CD4-positive, alpha-beta memory T cell (primary cell): ENCODE measurements at regions of chr22 and their contacts with region 1.

Region 1: DNA sequence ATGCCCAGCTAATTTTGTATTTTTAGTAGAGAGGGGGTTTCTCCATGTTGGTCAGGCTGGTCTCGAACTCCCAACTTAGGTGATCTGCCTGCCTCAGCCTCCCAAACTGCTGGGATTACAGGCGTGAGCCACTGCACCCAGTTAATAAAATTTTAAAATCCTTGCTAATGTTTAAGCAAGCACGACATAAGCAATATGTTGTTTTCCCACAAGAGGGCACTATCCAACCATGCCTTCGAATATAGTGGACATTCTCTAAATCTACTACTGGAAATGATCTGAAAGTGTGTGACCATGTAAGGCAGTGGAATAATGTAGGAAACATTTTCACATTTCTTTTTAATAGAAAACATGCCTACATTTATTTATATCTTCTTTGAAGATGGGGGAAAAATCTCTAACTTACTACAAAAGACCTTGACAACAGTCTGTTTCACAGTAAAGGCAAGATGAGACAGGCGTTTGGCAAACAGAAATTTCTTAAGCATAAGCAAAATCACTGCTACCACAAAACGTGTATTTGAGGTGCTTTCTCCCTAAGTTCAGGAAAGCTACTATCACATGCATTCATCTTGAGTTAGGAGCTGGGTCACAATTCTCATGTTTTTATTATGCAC is 38.2 kb downstream of the PITPNB start:
- DNase-seq: peak in 4 of 5 donors; percentile 24 to 36 (median 28)
- H3K4me3 ChIP-seq: no peak overlapping the region
- H3K4me3 Mint-ChIP-seq: no peak overlapping the region
- H3K27ac ChIP-seq: no peak overlapping the region
- H3K27ac Mint-ChIP-seq: peak overlapping the region in 1 of 7 donors; percentile 72
- H3K4me1 ChIP-seq: peaks cover 18% of the 10 kb centered on the region
- H3K4me1 Mint-ChIP-seq: peaks cover 11 to 27% (median 20%) of the 10 kb centered on the region in 4 donors
- H3K27me3 ChIP-seq: no peaks in the 10 kb centered on the region
- H3K27me3 Mint-ChIP-seq: no peaks in the 10 kb centered on the region

Region 2: DNA sequence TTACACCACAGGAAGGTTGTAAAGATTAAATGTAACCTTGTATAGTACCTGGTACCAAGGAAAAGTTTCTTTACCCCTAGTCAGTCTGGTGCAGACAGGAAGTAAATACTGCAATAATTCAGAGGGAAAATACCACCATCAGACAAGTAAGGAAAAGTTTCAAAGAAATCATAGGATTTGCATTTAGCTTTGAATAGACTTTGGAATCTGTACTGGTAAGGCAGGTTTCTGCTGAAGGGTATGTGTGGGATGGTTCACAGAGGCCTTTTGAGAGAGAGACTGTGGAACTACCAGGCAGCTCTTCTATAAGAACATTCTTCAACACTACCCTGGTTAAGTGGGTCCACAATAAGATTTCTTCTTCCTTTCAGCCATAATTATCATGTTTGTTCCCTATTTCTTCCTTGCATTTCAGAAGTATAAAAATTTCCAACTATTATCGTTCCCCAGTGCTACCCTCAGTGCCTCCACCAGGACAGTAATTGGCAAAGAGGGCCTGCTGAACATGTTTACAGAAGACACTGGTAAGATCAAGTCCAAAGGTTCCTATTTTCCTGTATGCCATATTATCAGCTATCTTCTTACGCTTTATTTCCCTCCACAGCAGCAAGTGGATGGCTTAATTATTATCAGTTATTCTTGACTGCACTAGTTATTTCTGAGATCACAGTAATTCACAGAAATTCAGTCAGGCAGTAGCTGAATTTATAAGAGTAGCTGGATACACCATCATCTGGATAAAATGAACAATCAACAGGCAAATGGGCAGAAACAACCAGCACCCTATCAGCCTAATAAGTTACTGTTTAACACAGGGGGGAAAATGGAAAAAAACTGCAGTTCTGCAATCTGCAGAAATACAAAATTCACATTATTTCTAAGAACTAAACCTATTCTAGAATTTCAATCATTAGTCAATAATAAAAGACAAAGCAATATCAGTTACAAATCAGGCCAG is 10.4 kb before region 1 on chr22:
- CTCF ChIA-PET with region 1: interaction called, 32 read pairs
- POLR2A ChIA-PET with region 1: no interaction called
- intact Hi-C with region 1: no loop called
- DNase-seq: no peak
- H3K4me3 ChIP-seq: no peak overlapping the region
- H3K4me3 Mint-ChIP-seq: no peak overlapping the region
- H3K27ac ChIP-seq: no peak overlapping the region
- H3K27ac Mint-ChIP-seq: peak overlapping the region in 6 of 7 donors; percentile 6 to 76 (median 61)
- H3K4me1 ChIP-seq: peaks cover under 1% of the 10 kb centered on the region
- H3K4me1 Mint-ChIP-seq: peaks cover 28 to 59% (median 42%) of the 10 kb centered on the region in 4 donors
- H3K27me3 ChIP-seq: no peaks in the 10 kb centered on the region
- H3K27me3 Mint-ChIP-seq: no peaks in the 10 kb centered on the region